CD8-positive, alpha-beta memory T cell (primary cell): ENCODE measurements at regions of chr6 and their contacts with region 1.

Region 1: GRCh38 chr6:20401205-20402091 is at the start of gene E2F3:
- DNase-seq: peak; percentile 97 to 100 (median 99)
- H3K4me3 ChIP-seq: peak within 1 kb of the TSS; percentile 96
- H3K4me3 Mint-ChIP-seq: peak within 1 kb of the TSS; percentile 89 to 98 (median 93)
- H3K27ac ChIP-seq: peak within 1 kb of the TSS; percentile 76
- H3K27ac Mint-ChIP-seq: peak within 1 kb of the TSS; percentile 74 to 96 (median 91)
- H3K4me1 ChIP-seq: peaks cover 27% of the 10 kb centered on the region
- H3K4me1 Mint-ChIP-seq: peaks cover 42 to 51% (median 47%) of the 10 kb centered on the region in 3 donors
- H3K27me3 ChIP-seq: no peaks in the 10 kb centered on the region
- H3K27me3 Mint-ChIP-seq: no peaks in the 10 kb centered on the region
- total RNA-seq, gene E2F3: 31.5 to 32.3 TPM

Region 2: GRCh38 chr6:20291764-20292580 is 109.5 kb before region 1 on chr6:
- CTCF ChIA-PET with region 1: interaction called, 11 read pairs
- POLR2A ChIA-PET with region 1: interaction called, 3 read pairs
- DNase-seq: peak; percentile 56 to 79 (median 59)
- H3K4me3 ChIP-seq: no peak overlapping the region
- H3K4me3 Mint-ChIP-seq: peak overlapping the region in 6 of 7 donors; percentile 29 to 79 (median 58)
- H3K27ac ChIP-seq: no peak overlapping the region
- H3K27ac Mint-ChIP-seq: peak overlapping the region in 5 of 8 donors; percentile 8 to 71 (median 44)
- H3K4me1 ChIP-seq: peaks cover 18% of the 10 kb centered on the region
- H3K4me1 Mint-ChIP-seq: peaks cover 28 to 38% (median 35%) of the 10 kb centered on the region in 3 donors
- H3K27me3 ChIP-seq: no peaks in the 10 kb centered on the region
- H3K27me3 Mint-ChIP-seq: no peaks in the 10 kb centered on the region

Region 3: GRCh38 chr6:20319520-20320357 is 81.7 kb before region 1 on chr6:
- CTCF ChIA-PET with region 1: interaction called, 53 read pairs
- POLR2A ChIA-PET with region 1: interaction called, 38 read pairs
- DNase-seq: peak; percentile 60 to 90 (median 80)
- H3K4me3 ChIP-seq: peak overlapping the region; percentile 61
- H3K4me3 Mint-ChIP-seq: peak overlapping the region; percentile 83 to 93 (median 91)
- H3K27ac ChIP-seq: peak overlapping the region; percentile 72
- H3K27ac Mint-ChIP-seq: peak overlapping the region; percentile 87 to 98 (median 97)
- H3K4me1 ChIP-seq: peaks cover 11% of the 10 kb centered on the region
- H3K4me1 Mint-ChIP-seq: peaks cover 21 to 25% (median 22%) of the 10 kb centered on the region in 3 donors
- H3K27me3 ChIP-seq: no peaks in the 10 kb centered on the region
- H3K27me3 Mint-ChIP-seq: peaks cover 0 to 2% of the 10 kb centered on the region in 2 donors

Region 4: DNA sequence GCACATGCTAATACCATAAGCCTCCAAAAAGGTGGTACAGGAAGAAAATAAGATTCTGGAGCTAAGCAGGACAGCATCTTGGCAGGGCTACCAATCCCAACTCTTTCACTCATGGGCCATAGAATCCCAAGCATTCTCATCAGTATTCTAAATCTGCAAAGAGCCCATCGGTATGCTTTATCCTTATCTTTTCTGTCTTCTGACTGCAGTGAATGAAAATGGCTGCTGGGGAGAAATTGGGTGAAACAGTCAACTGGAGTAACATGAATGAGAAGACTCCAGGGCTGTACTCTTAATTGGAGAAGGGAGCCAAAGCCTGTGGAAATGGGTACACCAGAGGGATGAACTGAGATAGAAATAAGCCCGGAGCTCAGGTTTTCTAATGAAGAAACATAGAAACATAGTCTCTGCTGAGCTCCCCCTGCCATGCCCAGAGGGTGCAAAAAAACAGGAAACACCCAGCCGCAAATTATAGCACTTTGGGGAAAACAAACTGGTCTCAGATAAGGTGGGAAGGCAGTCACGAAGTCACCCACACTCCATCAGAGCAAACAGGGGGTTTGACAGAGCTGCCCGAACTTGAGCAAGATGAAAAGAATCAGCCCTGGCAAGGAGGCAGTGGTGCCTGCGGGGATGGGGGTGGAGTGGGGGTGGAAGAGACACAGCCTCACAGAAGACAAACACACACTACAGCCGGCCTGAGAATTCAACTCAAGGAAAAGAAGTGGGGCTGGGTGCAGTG is 35.2 kb before region 1 on chr6:
- CTCF ChIA-PET with region 1: interaction called, 23 read pairs
- POLR2A ChIA-PET with region 1: interaction called, 20 read pairs
- DNase-seq: peak; percentile 7 to 75 (median 64)
- H3K4me3 ChIP-seq: peak overlapping the region; percentile 25
- H3K4me3 Mint-ChIP-seq: peak overlapping the region; percentile 57 to 84 (median 83)
- H3K27ac ChIP-seq: no peak overlapping the region
- H3K27ac Mint-ChIP-seq: peak overlapping the region; percentile 86 to 96 (median 96)
- H3K4me1 ChIP-seq: peaks cover 63% of the 10 kb centered on the region
- H3K4me1 Mint-ChIP-seq: peaks cover 61 to 69% (median 68%) of the 10 kb centered on the region in 3 donors
- H3K27me3 ChIP-seq: no peaks in the 10 kb centered on the region
- H3K27me3 Mint-ChIP-seq: peaks cover 0 to 2% of the 10 kb centered on the region in 2 donors

Region 5: GRCh38 chr6:20377623-20378265 is 23.7 kb before region 1 on chr6:
- CTCF ChIA-PET with region 1: interaction called, 6 read pairs
- POLR2A ChIA-PET with region 1: interaction called, 11 read pairs
- DNase-seq: no peak
- H3K4me3 ChIP-seq: no peak overlapping the region
- H3K4me3 Mint-ChIP-seq: peak overlapping the region in 1 of 7 donors; percentile 27
- H3K27ac ChIP-seq: no peak overlapping the region
- H3K27ac Mint-ChIP-seq: peak overlapping the region in 3 of 8 donors; percentile 5 to 68 (median 17)
- H3K4me1 ChIP-seq: peaks cover 7% of the 10 kb centered on the region
- H3K4me1 Mint-ChIP-seq: peaks cover 14 to 30% (median 27%) of the 10 kb centered on the region in 3 donors
- H3K27me3 ChIP-seq: no peaks in the 10 kb centered on the region
- H3K27me3 Mint-ChIP-seq: no peaks in the 10 kb centered on the region

Region 6: DNA sequence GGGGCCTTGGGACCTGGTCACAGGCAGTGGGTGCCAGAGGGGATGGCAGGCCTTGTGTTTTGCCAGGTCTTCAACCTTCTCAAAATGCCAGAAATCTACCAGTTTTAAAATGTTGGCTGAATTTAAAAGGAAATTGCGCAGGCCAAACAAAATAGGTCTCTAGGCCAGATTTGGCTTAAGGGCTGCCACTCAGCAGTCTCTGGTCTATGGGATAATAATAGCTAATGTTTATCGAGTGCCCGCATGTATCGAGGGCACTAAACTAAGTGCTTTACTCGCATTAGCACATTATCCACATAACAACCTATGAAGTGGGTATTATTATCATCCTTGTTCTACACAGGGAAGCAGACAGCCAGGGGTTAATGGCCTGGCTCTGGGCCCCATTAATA is 11.2 kb after region 1 on chr6:
- CTCF ChIA-PET with region 1: interaction called, 13 read pairs
- POLR2A ChIA-PET with region 1: interaction called, 7 read pairs
- DNase-seq: no peak
- H3K4me3 ChIP-seq: no peak overlapping the region
- H3K4me3 Mint-ChIP-seq: no peak overlapping the region
- H3K27ac ChIP-seq: no peak overlapping the region
- H3K27ac Mint-ChIP-seq: peak overlapping the region in 1 of 8 donors; percentile 38
- H3K4me1 ChIP-seq: peaks cover 66% of the 10 kb centered on the region
- H3K4me1 Mint-ChIP-seq: peaks cover 75 to 97% (median 94%) of the 10 kb centered on the region in 3 donors
- H3K27me3 ChIP-seq: no peaks in the 10 kb centered on the region
- H3K27me3 Mint-ChIP-seq: no peaks in the 10 kb centered on the region

Region 7: GRCh38 chr6:20534295-20535262 is 133.1 kb after region 1 on chr6 and contains the start of gene CDKAL1:
- CTCF ChIA-PET with region 1: interaction called, 23 read pairs
- POLR2A ChIA-PET with region 1: no interaction called
- DNase-seq: peak; percentile 81 to 94 (median 86)
- H3K4me3 ChIP-seq: peak within 1 kb of the TSS; percentile 77
- H3K4me3 Mint-ChIP-seq: peak within 1 kb of the TSS; percentile 95 to 99 (median 98)
- H3K27ac ChIP-seq: peak within 1 kb of the TSS; percentile 78
- H3K27ac Mint-ChIP-seq: peak within 1 kb of the TSS; percentile 95 to 99 (median 97)
- H3K4me1 ChIP-seq: peaks cover 11% of the 10 kb centered on the region
- H3K4me1 Mint-ChIP-seq: peaks cover 34 to 55% (median 42%) of the 10 kb centered on the region in 3 donors
- H3K27me3 ChIP-seq: no peaks in the 10 kb centered on the region
- H3K27me3 Mint-ChIP-seq: peaks cover 0 to 3% of the 10 kb centered on the region in 2 donors
- total RNA-seq, gene CDKAL1: 29.6 to 30.2 TPM